Naive thymus-derived CD4-positive, alpha-beta T cell (primary cell): ENCODE measurements at regions of chr1 and their contacts with region 1.

Region 1: GRCh38 chr1:220046052-220046930 is at the start of gene EPRS1:
- DNase-seq: peak; percentile 83 to 97 (median 95)
- ATAC-seq: peak; percentile 99
- H3K4me3 ChIP-seq: peak within 1 kb of the TSS; percentile 92
- H3K4me3 Mint-ChIP-seq: peak within 1 kb of the TSS; percentile 88 to 99 (median 93)
- H3K27ac ChIP-seq: peak within 1 kb of the TSS; percentile 86
- H3K27ac Mint-ChIP-seq: peak within 1 kb of the TSS; percentile 80 to 99 (median 94)
- H3K4me1 ChIP-seq: peaks cover 0 to 23% of the 10 kb centered on the region in 2 donors
- H3K4me1 Mint-ChIP-seq: peaks cover 8 to 48% (median 34%) of the 10 kb centered on the region in 7 donors
- H3K27me3 ChIP-seq: no peaks in the 10 kb centered on the region
- H3K27me3 Mint-ChIP-seq: peaks cover 0 to 3% (median 0%) of the 10 kb centered on the region in 5 donors
- total RNA-seq, gene EPRS1: 39.2 to 130 (median 93.6) TPM

Region 2: DNA sequence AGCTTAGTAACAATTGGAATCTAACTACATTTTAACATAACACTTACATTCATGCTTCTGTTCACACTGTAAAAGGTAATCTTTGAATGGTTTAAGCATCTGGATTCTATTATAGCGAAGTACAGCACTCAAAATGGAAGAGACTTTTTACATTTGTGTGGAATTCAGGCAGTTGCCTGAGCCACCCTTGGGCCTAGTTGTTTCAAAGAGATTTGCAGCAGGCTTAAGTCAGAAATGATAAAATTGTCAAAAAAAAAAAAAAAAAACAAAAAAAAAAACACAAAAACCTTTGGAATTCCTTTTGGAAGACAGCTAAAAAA is 672.7 kb before region 1 on chr1:
- CTCF ChIA-PET with region 1: no interaction called
- POLR2A ChIA-PET with region 1: no interaction called
- intact Hi-C with region 1: no loop called
- DNase-seq: no peak
- ATAC-seq: no peak
- H3K4me3 ChIP-seq: no peak overlapping the region
- H3K4me3 Mint-ChIP-seq: no peak overlapping the region
- H3K27ac ChIP-seq: no peak overlapping the region
- H3K27ac Mint-ChIP-seq: no peak overlapping the region
- H3K4me1 ChIP-seq: no peaks in the 10 kb centered on the region
- H3K4me1 Mint-ChIP-seq: no peaks in the 10 kb centered on the region
- H3K27me3 ChIP-seq: no peaks in the 10 kb centered on the region
- H3K27me3 Mint-ChIP-seq: no peaks in the 10 kb centered on the region

Region 3: GRCh38 chr1:219398815-219399396 is 647.4 kb before region 1 on chr1:
- CTCF ChIA-PET with region 1: no interaction called
- POLR2A ChIA-PET with region 1: no interaction called
- intact Hi-C with region 1: no loop called
- DNase-seq: no peak
- ATAC-seq: peak; percentile 16
- H3K4me3 ChIP-seq: no peak overlapping the region
- H3K4me3 Mint-ChIP-seq: no peak overlapping the region
- H3K27ac ChIP-seq: no peak overlapping the region
- H3K27ac Mint-ChIP-seq: no peak overlapping the region
- H3K4me1 ChIP-seq: no peaks in the 10 kb centered on the region
- H3K4me1 Mint-ChIP-seq: no peaks in the 10 kb centered on the region
- H3K27me3 ChIP-seq: no peaks in the 10 kb centered on the region
- H3K27me3 Mint-ChIP-seq: peaks cover 0 to 23% (median 14%) of the 10 kb centered on the region in 5 donors

Region 4: DNA sequence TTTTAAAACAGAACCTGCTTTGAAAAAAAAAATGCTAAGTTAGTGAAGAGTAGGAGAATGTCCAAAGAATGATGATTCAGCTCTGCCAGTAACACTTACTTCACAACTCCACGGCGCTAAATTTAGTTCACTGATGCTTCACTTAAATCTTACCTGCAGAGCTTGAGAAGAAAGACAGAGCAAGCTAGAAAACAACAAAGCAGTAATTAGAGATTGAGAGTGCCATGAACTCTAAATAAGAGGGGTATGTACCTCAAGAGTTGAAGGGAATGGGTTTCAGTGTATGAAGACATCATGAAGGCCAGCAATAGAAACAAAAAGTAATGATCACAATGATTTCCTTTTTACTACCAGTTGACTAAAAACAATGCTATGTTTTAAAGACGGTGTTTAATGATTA is 32.8 kb before region 1 on chr1:
- CTCF ChIA-PET with region 1: no interaction called
- POLR2A ChIA-PET with region 1: no interaction called
- intact Hi-C with region 1: loop called in 1 of 2 experiments (anchors 1 kb)
- DNase-seq: no peak
- ATAC-seq: no peak
- H3K4me3 ChIP-seq: no peak overlapping the region
- H3K4me3 Mint-ChIP-seq: peak overlapping the region in 1 of 10 donors; percentile 43
- H3K27ac ChIP-seq: no peak overlapping the region
- H3K27ac Mint-ChIP-seq: peak overlapping the region in 3 of 9 donors; percentile 24 to 79 (median 66)
- H3K4me1 ChIP-seq: no peaks in the 10 kb centered on the region
- H3K4me1 Mint-ChIP-seq: peaks cover 0 to 34% (median 8%) of the 10 kb centered on the region in 7 donors
- H3K27me3 ChIP-seq: no peaks in the 10 kb centered on the region
- H3K27me3 Mint-ChIP-seq: no peaks in the 10 kb centered on the region

Region 5: DNA sequence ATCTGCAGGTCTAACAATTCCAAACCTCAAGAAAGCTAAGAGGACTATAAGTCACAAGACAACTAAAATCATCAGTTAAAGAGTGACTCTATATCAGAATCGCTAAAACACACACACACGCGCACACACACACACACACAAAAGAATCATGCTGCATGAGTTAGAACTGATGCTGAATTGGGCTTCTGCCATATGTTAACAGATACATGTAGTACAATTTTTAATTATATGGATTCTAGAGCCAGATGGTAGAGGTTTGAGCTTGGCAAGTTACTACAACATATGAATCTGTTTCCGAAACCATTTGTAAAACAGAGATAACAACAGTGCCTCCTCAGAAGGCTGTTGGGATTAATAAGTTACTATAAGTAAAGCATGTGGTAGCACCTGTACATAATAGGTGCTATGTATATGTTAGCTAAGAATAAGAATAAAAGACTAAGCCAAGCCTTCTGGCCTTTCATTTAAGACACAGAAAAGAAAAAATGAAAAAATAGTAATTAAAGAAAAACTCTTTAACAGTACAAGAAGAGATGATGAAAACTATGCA is 17.9 kb before region 1 on chr1:
- CTCF ChIA-PET with region 1: no interaction called
- POLR2A ChIA-PET with region 1: no interaction called
- intact Hi-C with region 1: no loop called
- DNase-seq: no peak
- ATAC-seq: no peak
- H3K4me3 ChIP-seq: no peak overlapping the region
- H3K4me3 Mint-ChIP-seq: no peak overlapping the region
- H3K27ac ChIP-seq: no peak overlapping the region
- H3K27ac Mint-ChIP-seq: peak overlapping the region in 1 of 9 donors; percentile 14
- H3K4me1 ChIP-seq: no peaks in the 10 kb centered on the region
- H3K4me1 Mint-ChIP-seq: peaks cover 0 to 7% (median 0%) of the 10 kb centered on the region in 7 donors
- H3K27me3 ChIP-seq: no peaks in the 10 kb centered on the region
- H3K27me3 Mint-ChIP-seq: no peaks in the 10 kb centered on the region

Region 6: DNA sequence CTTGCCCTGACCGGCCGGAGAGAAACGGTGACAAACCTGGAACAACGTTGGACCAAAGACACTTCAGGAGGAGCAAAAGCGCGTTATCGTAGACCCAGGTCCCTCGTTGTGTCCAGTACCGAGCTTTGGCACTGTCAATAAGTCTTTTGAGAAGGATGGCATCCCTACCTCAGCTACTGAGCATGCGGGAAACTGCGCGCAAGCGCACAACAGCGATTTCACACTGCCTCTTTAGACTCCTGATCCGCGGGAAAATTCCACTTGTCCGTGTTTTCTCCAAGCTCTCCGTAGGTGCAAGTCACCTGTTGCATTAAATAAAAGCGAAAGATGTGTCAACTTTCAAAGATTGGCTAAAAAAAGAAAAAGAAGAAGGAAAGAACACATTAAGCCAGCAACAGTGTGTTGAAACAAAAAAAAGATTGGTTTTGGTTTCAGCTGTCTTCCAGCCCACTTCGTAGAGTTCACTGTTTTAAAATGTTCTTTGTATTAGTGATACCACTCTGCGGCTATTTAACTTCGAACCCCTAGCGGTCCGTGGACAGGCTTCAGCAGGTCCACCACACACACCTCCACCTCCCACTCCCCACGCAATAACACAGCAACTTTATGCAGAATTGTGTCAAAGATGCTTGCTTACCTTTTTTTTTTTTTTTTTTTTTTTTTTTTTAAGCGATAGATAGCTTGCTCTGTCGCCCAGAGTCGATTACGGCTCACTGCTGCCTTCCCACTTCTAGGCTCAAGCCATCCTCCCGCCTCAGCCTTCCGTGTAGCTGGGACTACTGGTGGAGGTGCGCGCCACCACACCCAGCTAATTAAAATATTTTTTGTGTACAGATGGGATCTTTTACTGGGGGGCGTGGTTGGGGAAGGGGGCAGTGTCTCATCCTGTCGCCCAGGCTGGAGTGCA is 43.6 kb after region 1 on chr1 and contains the start of gene BPNT1:
- CTCF ChIA-PET with region 1: interaction called, 4 read pairs
- POLR2A ChIA-PET with region 1: interaction called, 5 read pairs
- intact Hi-C with region 1: loop called (anchors 1 kb)
- DNase-seq: peak; percentile 90 to 99 (median 97)
- ATAC-seq: peak; percentile 87
- H3K4me3 ChIP-seq: peak within 1 kb of the TSS; percentile 83
- H3K4me3 Mint-ChIP-seq: peak within 1 kb of the TSS; percentile 88 to 100 (median 94)
- H3K27ac ChIP-seq: peak within 1 kb of the TSS; percentile 72
- H3K27ac Mint-ChIP-seq: peak within 1 kb of the TSS; percentile 86 to 97 (median 94)
- H3K4me1 ChIP-seq: peaks cover 9 to 13% of the 10 kb centered on the region in 2 donors
- H3K4me1 Mint-ChIP-seq: peaks cover 0 to 42% (median 36%) of the 10 kb centered on the region in 7 donors
- H3K27me3 ChIP-seq: no peaks in the 10 kb centered on the region
- H3K27me3 Mint-ChIP-seq: peaks cover 0 to 2% (median 0%) of the 10 kb centered on the region in 5 donors
- total RNA-seq, gene BPNT1: 5.5 to 24.6 (median 15.0) TPM

Region 7: GRCh38 chr1:220690140-220691025 is 644.1 kb after region 1 on chr1 and contains the start of gene C1orf115:
- CTCF ChIA-PET with region 1: no interaction called
- POLR2A ChIA-PET with region 1: no interaction called
- intact Hi-C with region 1: loop called in 1 of 2 experiments (anchors 5 kb)
- DNase-seq: peak; percentile 57 to 81 (median 71)
- ATAC-seq: peak; percentile 99
- H3K4me3 ChIP-seq: peak within 1 kb of the TSS; percentile 58
- H3K4me3 Mint-ChIP-seq: peak within 1 kb of the TSS; percentile 71 to 89 (median 86)
- H3K27ac ChIP-seq: peak within 1 kb of the TSS; percentile 43
- H3K27ac Mint-ChIP-seq: peak within 1 kb of the TSS in 3 of 9 donors; percentile 22 to 52 (median 32)
- H3K4me1 ChIP-seq: peaks cover 5 to 8% of the 10 kb centered on the region in 2 donors
- H3K4me1 Mint-ChIP-seq: peaks cover 5 to 14% (median 7%) of the 10 kb centered on the region in 7 donors
- H3K27me3 ChIP-seq: no peaks in the 10 kb centered on the region
- H3K27me3 Mint-ChIP-seq: peaks cover 5 to 32% (median 11%) of the 10 kb centered on the region in 5 donors
- total RNA-seq, gene C1orf115: 0.17 to 2.1 (median 1.5) TPM